ENCODE measurements at regions of chr11 and their contacts with region 1.

Region 1: GRCh38 chr11:45771566-45772448 is 33.1 kb upstream of the SLC35C1 start:
- DNase-seq: peak; percentile 84 to 92
- H3K4me3 ChIP-seq: peak overlapping the region; percentile 38
- H3K4me3 Mint-ChIP-seq: peak overlapping the region; percentile 97
- H3K27ac Mint-ChIP-seq: no peak overlapping the region
- H3K4me1 ChIP-seq: no peaks in the 10 kb centered on the region; the same call in 1 of the 2 replicates
- H3K4me1 Mint-ChIP-seq: peaks cover 12% of the 10 kb centered on the region
- H3K27me3 ChIP-seq: no peaks in the 10 kb centered on the region
- H3K27me3 Mint-ChIP-seq: peaks cover 25% of the 10 kb centered on the region
- CTCF ChIP-seq: peak; percentile 93

Region 2: GRCh38 chr11:45339729-45340519 is 431.9 kb before region 1 on chr11:
- CTCF ChIA-PET with region 1: interaction called, 15 read pairs
- POLR2A ChIA-PET with region 1: no interaction called
- intact Hi-C with region 1: loop called (anchors 1 kb)
- DNase-seq: peak; percentile 95 to 96
- H3K4me3 ChIP-seq: no peak overlapping the region
- H3K4me3 Mint-ChIP-seq: peak overlapping the region; percentile 25
- H3K27ac Mint-ChIP-seq: no peak overlapping the region
- H3K4me1 ChIP-seq: no peaks in the 10 kb centered on the region
- H3K4me1 Mint-ChIP-seq: peaks cover 11% of the 10 kb centered on the region
- H3K27me3 ChIP-seq: no peaks in the 10 kb centered on the region; the same call in 1 of the 2 replicates
- H3K27me3 Mint-ChIP-seq: peaks cover 23% of the 10 kb centered on the region
- CTCF ChIP-seq: peak; percentile 89

Region 3: DNA sequence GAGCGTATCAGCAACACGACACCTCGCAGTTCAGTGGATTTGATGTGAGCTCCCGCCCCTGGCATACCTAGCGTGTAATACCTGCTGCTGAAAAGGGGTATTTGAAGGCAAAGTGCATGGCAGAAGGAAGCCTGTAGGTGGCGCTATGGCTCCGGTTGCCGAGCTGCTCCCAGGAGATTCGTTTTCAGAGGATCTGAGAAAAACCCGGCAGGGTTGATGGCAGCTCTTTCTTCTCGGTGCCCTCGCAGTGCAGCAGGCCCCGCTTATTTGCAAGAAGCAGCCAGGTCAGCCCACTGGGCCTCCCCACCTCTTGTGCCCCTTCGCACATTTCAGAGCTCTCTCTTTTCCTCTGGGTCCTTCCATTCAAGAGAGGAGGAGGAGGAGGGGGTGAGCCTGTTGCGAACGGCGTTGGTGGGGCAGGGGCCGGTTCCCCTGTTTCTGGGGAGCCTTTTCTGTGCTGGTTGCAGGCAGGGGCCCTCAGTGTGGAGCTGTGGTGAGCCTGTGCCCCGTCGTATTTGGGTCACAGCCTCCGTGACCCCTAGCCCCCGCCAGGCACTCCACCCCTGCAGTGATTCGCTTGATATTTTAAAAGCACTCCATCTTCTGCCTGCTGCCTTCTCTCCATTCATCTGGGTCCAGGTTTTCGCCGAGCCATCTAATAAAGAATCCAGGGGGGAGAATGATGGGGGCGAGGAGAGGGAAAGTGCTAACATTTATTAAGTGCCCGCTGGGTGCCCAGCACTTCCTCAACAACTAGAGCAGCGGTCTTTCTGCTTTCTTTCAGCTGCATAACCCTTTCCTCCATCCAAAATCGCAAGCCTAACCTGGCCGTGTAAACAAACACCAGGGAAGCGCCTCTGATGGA is 400.3 kb before region 1 on chr11:
- CTCF ChIA-PET with region 1: interaction called, 49 read pairs
- POLR2A ChIA-PET with region 1: no interaction called
- intact Hi-C with region 1: loop called (anchors 1 kb)
- DNase-seq: peak; percentile 72 to 79
- H3K4me3 ChIP-seq: no peak overlapping the region
- H3K4me3 Mint-ChIP-seq: no peak overlapping the region
- H3K27ac Mint-ChIP-seq: no peak overlapping the region
- H3K4me1 ChIP-seq: no peaks in the 10 kb centered on the region
- H3K4me1 Mint-ChIP-seq: no peaks in the 10 kb centered on the region
- H3K27me3 ChIP-seq: peaks cover 1% of the 10 kb centered on the region
- H3K27me3 Mint-ChIP-seq: peaks cover 30% of the 10 kb centered on the region
- CTCF ChIP-seq: peak; percentile 92 to 97

Region 4: GRCh38 chr11:45655347-45655756 is 116.5 kb before region 1 on chr11:
- CTCF ChIA-PET with region 1: interaction called, 16 read pairs
- POLR2A ChIA-PET with region 1: no interaction called
- intact Hi-C with region 1: loop called (anchors 5 kb)
- DNase-seq: peak; percentile 68 to 81
- H3K4me3 ChIP-seq: no peak overlapping the region
- H3K4me3 Mint-ChIP-seq: no peak overlapping the region
- H3K27ac Mint-ChIP-seq: no peak overlapping the region
- H3K4me1 ChIP-seq: no peaks in the 10 kb centered on the region
- H3K4me1 Mint-ChIP-seq: no peaks in the 10 kb centered on the region
- H3K27me3 ChIP-seq: peaks cover 5% of the 10 kb centered on the region
- H3K27me3 Mint-ChIP-seq: peaks cover 29% of the 10 kb centered on the region
- CTCF ChIP-seq: peak; percentile 82 to 97

Region 5: GRCh38 chr11:45739871-45740270 is 31.9 kb before region 1 on chr11:
- CTCF ChIA-PET with region 1: no interaction called
- POLR2A ChIA-PET with region 1: no interaction called
- intact Hi-C with region 1: no loop called
- DNase-seq: no peak
- H3K4me3 ChIP-seq: no peak overlapping the region
- H3K4me3 Mint-ChIP-seq: no peak overlapping the region
- H3K27ac Mint-ChIP-seq: no peak overlapping the region
- H3K4me1 ChIP-seq: no peaks in the 10 kb centered on the region
- H3K4me1 Mint-ChIP-seq: no peaks in the 10 kb centered on the region
- H3K27me3 ChIP-seq: no peaks in the 10 kb centered on the region
- H3K27me3 Mint-ChIP-seq: peaks cover 18% of the 10 kb centered on the region
- CTCF ChIP-seq: no peak

Region 6: GRCh38 chr11:45815449-45816146 is 43.8 kb after region 1 on chr11:
- CTCF ChIA-PET with region 1: interaction called, 14 read pairs
- POLR2A ChIA-PET with region 1: no interaction called
- intact Hi-C with region 1: loop called (anchors 5 kb)
- DNase-seq: peak; percentile 51 to 61
- H3K4me3 ChIP-seq: no peak overlapping the region
- H3K4me3 Mint-ChIP-seq: no peak overlapping the region
- H3K27ac Mint-ChIP-seq: no peak overlapping the region
- H3K4me1 ChIP-seq: no peaks in the 10 kb centered on the region
- H3K4me1 Mint-ChIP-seq: peaks cover 12% of the 10 kb centered on the region
- H3K27me3 ChIP-seq: no peaks in the 10 kb centered on the region
- H3K27me3 Mint-ChIP-seq: no peaks in the 10 kb centered on the region
- CTCF ChIP-seq: no peak

Region 7: DNA sequence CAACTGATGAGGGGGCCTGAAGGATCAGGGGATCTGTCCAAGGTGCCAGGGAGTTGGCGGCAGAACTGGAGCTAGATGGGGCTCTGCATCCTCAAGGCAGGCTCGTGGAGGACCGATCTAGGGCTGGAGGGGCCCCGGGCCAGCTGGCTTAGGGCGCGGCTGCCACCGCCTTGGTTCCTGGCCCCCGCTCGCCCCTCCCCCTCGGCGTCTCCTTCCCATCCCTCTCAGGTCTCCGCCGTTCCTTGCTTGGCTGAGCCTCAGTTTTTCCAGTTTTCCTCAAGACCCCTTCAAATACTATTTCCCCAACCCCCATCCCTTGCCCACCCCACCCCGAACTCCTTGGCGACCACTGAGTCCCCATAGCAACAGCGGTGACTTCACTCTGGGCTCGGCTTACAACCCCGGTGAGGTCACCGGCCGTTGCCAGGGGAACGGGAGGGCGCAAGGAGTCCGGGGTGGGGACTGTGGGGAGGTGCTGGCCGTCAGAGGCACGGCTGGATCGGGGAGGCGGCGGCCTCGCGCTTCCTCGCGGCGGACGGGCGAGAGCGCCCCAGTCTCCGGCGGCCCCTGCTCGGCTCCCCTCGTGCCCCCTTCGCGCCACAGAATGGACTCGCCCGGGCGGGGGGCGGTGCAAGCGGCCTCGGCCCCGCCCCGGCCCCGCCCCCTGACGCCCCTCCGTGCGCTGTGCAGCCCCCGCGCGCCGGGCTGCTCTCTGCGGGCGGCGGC is 127.8 kb after region 1 on chr11:
- CTCF ChIA-PET with region 1: no interaction called
- POLR2A ChIA-PET with region 1: no interaction called
- intact Hi-C with region 1: no loop called
- DNase-seq: peak; percentile 87 to 91
- H3K4me3 ChIP-seq: peak overlapping the region; percentile 67
- H3K4me3 Mint-ChIP-seq: peak overlapping the region; percentile 77
- H3K27ac Mint-ChIP-seq: peak overlapping the region; percentile 84
- H3K4me1 ChIP-seq: peaks cover 10% of the 10 kb centered on the region
- H3K4me1 Mint-ChIP-seq: peaks cover 8% of the 10 kb centered on the region
- H3K27me3 ChIP-seq: no peaks in the 10 kb centered on the region
- H3K27me3 Mint-ChIP-seq: peaks cover 4% of the 10 kb centered on the region
- CTCF ChIP-seq: no peak

Region 8: DNA sequence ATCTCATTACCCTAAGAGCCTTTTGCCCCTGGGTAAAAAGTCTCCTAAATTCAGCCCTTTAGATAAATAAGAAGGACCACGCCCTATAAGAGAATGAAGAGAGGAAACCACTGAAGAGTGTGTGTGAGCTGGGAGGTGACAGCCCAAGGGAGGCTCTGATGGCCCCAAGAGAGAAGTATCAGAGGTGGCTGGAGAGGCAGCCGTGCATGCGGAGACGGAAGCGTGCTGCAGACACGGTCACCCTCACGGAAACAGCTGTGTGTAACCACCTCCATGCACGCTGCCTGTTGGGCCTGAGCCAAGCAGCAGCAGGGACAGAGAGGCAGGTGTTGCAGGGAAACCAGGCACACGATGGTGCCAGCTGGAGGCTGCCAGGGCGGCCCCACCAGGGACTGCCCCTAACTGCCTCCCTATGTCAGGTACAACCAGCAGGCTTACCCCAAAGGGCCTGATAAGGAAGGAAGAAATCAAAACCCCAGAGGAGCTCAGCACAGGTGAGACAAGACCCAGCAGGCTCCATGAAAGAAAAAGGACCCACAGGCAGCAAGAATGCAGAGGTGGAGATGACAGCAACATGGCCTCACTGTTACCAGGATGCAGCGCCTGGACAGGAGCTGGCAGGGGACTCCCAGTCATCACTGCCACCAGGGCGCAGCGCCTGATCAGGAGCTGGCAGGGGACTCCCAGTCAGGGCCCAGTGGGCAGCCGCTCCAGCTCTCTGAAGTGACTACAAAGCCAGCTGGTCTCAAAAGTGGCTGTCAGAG is 158.4 kb after region 1 on chr11:
- CTCF ChIA-PET with region 1: no interaction called
- POLR2A ChIA-PET with region 1: no interaction called
- intact Hi-C with region 1: no loop called
- DNase-seq: no peak
- H3K4me3 ChIP-seq: no peak overlapping the region
- H3K4me3 Mint-ChIP-seq: no peak overlapping the region
- H3K27ac Mint-ChIP-seq: no peak overlapping the region
- H3K4me1 ChIP-seq: 0 out of 2 replicates have a peak, but pooled peaks cover 4% of the 10 kb centered on the region
- H3K4me1 Mint-ChIP-seq: no peaks in the 10 kb centered on the region
- H3K27me3 ChIP-seq: no peaks in the 10 kb centered on the region
- H3K27me3 Mint-ChIP-seq: no peaks in the 10 kb centered on the region
- CTCF ChIP-seq: no peak

Region 9: DNA sequence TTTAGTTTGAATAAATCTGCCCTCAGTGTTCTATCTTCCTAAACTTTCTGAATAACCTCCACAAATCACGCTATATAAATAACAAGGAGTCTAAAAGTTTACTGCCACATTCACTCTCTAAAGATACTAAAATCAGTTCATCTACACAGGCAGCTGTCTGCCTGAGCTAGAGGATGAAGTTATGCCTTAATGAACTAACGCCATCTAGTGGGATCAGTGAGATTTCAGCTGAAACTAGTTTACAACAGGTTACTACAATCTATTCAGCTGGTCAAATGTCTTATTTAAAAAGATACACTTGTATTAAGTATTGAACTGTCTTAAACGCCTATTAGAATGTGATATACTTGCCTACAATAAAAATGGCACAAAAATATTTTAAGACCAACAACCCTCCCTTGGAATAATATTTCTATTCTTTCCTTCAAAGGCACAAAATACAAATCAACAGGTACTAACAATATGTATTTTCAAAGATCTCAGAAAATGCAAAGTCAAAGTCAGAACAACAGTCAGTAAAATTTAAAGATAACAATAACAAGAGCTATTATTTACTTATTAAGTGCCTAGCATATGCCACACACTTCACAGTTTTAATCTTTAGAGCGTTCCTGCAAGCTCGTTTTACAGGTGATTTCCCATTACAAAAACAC is 234.7 kb after region 1 on chr11:
- CTCF ChIA-PET with region 1: interaction called, 4 read pairs
- POLR2A ChIA-PET with region 1: no interaction called
- intact Hi-C with region 1: loop called (anchors 1 kb)
- DNase-seq: peak in 1 of 2 experiments; percentile 73
- H3K4me3 ChIP-seq: no peak overlapping the region
- H3K4me3 Mint-ChIP-seq: no peak overlapping the region
- H3K27ac Mint-ChIP-seq: no peak overlapping the region
- H3K4me1 ChIP-seq: peaks cover 10% of the 10 kb centered on the region
- H3K4me1 Mint-ChIP-seq: peaks cover 12% of the 10 kb centered on the region
- H3K27me3 ChIP-seq: no peaks in the 10 kb centered on the region
- H3K27me3 Mint-ChIP-seq: no peaks in the 10 kb centered on the region
- CTCF ChIP-seq: peak; percentile 73 to 81